GM10248 (cell line): ENCODE measurements at regions of chr20 and their contacts with region 1.

Region 1: DNA sequence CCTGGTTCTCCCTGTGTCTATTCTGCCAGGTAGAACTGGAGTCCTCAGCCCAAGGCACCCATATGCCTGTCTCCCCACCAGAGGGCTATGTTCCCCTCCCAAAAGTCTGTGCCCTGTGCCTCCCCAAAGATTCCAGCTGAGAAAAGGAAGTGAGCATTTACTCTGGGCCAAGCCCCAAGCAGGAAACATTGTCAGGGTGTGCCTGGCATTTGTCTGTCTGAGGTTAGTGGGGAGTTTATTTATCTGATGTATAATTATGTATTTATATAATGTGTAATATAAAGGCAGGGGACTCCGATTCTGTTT is 5.6 kb downstream of the GDF5 start:
- DNase-seq: no peak
- CTCF ChIP-seq: no peak

Region 2: DNA sequence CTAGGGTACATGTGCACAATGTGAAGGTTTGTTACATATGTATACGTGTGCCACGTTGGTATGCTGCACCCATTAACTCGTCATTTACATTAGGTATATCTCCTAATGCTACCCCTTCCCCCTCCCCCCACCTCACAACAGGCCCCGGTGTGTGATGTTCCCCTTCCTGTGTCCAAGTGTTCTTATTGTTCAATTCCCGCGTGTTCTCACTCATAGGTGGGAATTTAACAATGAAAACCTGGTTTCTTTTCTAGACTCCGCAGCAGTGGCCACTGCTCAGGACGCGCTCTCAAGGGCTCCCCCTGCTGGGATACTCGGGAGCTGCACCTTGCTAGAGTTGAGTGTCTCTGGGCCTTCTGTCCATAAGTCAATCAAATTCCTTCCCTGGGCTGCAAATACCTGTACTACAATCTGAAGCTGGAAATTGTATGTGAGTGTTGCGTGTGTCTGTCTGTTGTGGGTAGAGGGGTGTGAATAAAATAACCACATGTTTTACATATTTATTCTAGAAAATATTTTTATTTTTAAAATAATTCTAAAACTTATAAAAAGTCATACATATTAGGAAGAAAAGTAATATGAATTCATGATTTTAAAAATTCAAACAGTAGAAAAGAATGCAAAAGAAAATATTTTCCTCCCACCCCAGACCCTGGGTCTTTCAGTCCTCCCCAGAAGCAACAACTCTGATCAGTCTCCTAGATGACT is 14.9 kb after region 1 on chr20:
- CTCF ChIA-PET with region 1: interaction called, 74 read pairs
- POLR2A ChIA-PET with region 1: no interaction called
- DNase-seq: peak; percentile 83
- CTCF ChIP-seq: peak; percentile 97